ENCODE measurements at regions of chr19 and their contacts with region 1.

Region 1: DNA sequence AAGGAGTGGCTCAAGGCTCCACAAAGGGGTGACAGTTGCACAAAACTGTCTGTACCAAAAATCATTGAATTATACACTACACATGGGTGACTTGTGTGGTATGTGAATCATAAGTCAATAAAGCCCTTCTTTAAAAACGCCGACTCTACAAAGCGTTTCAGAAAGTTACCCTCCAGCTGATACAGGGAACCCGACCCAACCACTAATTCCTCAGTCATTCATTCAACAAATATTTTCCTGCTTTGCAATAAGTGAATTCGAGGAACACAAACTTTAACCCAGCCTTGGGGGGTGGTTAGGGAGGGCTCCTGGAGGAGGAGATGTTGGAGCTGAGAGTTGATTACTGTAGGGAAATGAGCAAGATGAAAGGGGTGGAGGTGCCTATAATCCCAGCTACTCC is 32.0 kb downstream of the LTBP4 start:
- DNase-seq: no peak
- ATAC-seq: no peak
- H3K4me3 Mint-ChIP-seq: no peak overlapping the region
- H3K27ac Mint-ChIP-seq: no peak overlapping the region
- H3K4me1 Mint-ChIP-seq: peaks cover 5% of the 10 kb centered on the region
- H3K27me3 Mint-ChIP-seq: peaks cover 4% of the 10 kb centered on the region
- CTCF ChIP-seq: no peak

Region 2: GRCh38 chr19:40305403-40305802 is 327.8 kb before region 1 on chr19:
- CTCF ChIA-PET with region 1: interaction called, 25 read pairs
- POLR2A ChIA-PET with region 1: no interaction called
- intact Hi-C with region 1: loop called (anchors 1 kb)
- DNase-seq: peak; percentile 44
- ATAC-seq: peak; percentile 69
- H3K4me3 Mint-ChIP-seq: no peak overlapping the region
- H3K27ac Mint-ChIP-seq: no peak overlapping the region
- H3K4me1 Mint-ChIP-seq: peaks cover 2% of the 10 kb centered on the region
- H3K27me3 Mint-ChIP-seq: no peaks in the 10 kb centered on the region
- CTCF ChIP-seq: no peak

Region 3: DNA sequence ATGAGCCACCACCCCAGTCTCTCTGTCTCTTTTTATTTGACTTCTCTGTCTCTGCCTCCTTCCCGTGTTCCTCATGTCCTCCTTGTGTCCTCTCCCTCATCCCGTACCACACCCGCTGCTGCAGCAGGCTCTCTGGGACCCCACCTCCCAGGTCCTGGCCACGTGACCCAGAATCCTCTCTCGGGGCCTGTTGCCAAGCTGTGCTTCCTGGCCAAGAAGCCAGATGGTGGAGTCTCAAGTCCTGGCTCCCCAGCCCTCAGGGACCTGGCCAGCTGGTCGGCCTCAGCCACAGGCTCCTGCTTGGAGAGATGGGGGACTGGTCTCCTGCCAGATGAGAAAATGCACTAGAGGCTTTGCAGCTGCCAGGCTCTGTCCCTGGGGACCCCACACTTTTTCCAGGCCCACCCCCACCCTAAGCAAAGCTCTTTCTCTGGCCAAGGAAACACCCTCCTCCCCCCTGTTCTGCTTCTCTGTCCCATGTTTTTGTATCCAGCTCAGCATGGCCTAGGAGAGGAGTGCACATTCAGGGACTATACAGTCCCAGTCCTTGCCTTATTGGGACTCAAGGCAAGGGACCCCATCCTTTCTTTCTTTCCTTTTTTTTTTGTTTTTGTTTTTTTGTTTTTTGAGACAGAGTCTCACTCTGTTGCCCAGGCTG is 90.9 kb before region 1 on chr19:
- CTCF ChIA-PET with region 1: interaction called, 20 read pairs
- POLR2A ChIA-PET with region 1: no interaction called
- intact Hi-C with region 1: loop called (anchors 2 kb)
- DNase-seq: no peak
- ATAC-seq: no peak
- H3K4me3 Mint-ChIP-seq: no peak overlapping the region
- H3K27ac Mint-ChIP-seq: no peak overlapping the region
- H3K4me1 Mint-ChIP-seq: no peaks in the 10 kb centered on the region
- H3K27me3 Mint-ChIP-seq: peaks cover 7% of the 10 kb centered on the region
- CTCF ChIP-seq: no peak

Region 4: DNA sequence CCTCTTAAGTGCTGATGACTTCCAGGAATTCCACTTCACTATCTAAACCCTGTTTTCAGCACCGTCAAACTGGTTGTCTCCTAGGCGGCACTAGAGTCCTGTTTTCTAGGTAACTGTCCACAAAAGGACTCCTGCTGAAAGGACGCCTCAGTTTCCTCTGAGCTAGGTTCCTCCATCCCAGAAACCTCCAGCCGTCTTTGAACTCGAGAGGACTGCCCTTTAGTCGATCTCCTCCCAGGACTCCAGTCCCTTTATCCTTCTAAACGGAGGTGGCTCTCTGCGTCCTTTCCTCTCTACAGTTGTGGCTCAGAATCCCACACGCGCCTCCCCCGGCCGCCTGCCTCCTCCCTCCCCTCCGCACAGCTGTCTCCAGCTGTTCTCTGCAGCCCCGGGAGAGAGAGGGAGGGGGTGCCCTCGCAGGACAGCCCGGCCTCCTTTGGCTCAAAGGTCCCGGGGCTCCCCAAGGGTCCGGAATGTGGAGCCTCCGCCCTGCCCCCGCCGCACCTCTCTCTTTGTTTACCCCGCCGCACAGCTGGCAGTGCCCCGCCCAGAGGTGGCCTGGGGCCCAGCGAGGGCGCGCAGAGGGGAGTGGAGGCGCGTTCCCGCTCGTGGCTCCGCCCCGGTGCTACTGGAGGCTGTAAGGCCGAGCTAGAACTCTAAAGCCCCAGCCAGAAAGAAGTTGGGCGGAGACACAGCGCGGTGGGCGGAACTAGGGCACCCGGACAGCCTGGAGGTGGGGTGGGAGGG is 29.6 kb before region 1 on chr19:
- CTCF ChIA-PET with region 1: interaction called, 45 read pairs
- POLR2A ChIA-PET with region 1: interaction called, 4 read pairs
- intact Hi-C with region 1: loop called (anchors 1 kb)
- DNase-seq: peak; percentile 90
- ATAC-seq: peak; percentile 72
- H3K4me3 Mint-ChIP-seq: peak overlapping the region; percentile 85
- H3K27ac Mint-ChIP-seq: peak overlapping the region; percentile 77
- H3K4me1 Mint-ChIP-seq: peaks cover 69% of the 10 kb centered on the region
- H3K27me3 Mint-ChIP-seq: peaks cover 22% of the 10 kb centered on the region
- CTCF ChIP-seq: no peak

Region 5: DNA sequence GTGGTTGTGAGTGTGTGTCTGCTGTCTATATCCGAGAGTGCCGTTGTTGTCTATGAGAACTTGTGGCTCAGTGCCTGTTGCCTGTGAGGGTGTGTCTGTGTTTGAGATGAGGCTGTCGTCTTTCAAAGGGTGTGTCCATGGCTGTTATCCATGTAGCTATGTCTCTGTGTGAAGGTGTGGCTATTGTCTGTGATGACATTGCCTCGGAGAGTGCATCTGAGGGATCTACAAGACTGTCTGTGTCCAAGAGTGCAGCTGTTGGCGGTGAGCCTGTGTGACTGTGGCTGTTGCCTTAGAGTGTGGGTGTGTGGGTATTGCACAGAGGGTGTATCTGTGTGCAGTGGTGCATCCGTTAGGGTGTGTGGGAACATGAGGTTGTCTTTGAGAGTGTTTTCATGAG is 52.4 kb after region 1 on chr19:
- CTCF ChIA-PET with region 1: no interaction called
- POLR2A ChIA-PET with region 1: no interaction called
- intact Hi-C with region 1: no loop called
- DNase-seq: no peak
- ATAC-seq: no peak
- H3K4me3 Mint-ChIP-seq: no peak overlapping the region
- H3K27ac Mint-ChIP-seq: no peak overlapping the region
- H3K4me1 Mint-ChIP-seq: peaks cover 6% of the 10 kb centered on the region
- H3K27me3 Mint-ChIP-seq: no peaks in the 10 kb centered on the region
- CTCF ChIP-seq: no peak